PC-3 (cell line): ENCODE measurements at regions of chr1 and their contacts with region 1.

Region 1: GRCh38 chr1:212782422-212783154 is 9.0 kb downstream of the NSL1 start:
- DNase-seq: peak; percentile 57
- ATAC-seq: peak; percentile 64
- H3K4me3 ChIP-seq: no peak overlapping the region
- H3K27ac ChIP-seq: no peak overlapping the region
- H3K4me1 ChIP-seq: no peaks in the 10 kb centered on the region
- H3K27me3 ChIP-seq: no peaks in the 10 kb centered on the region
- CTCF ChIP-seq: peak; percentile 91

Region 2: GRCh38 chr1:212665241-212666115 is 117.1 kb before region 1 on chr1:
- CTCF ChIA-PET with region 1: no interaction called
- POLR2A ChIA-PET with region 1: no interaction called
- intact Hi-C with region 1: loop called (anchors 1 kb)
- DNase-seq: peak; percentile 95
- ATAC-seq: peak; percentile 88
- H3K4me3 ChIP-seq: peak overlapping the region; percentile 72
- H3K27ac ChIP-seq: no peak overlapping the region; the same call in 1 of the 2 replicates
- H3K4me1 ChIP-seq: peaks cover 35% of the 10 kb centered on the region
- H3K27me3 ChIP-seq: no peaks in the 10 kb centered on the region
- CTCF ChIP-seq: peak; percentile 99

Region 3: DNA sequence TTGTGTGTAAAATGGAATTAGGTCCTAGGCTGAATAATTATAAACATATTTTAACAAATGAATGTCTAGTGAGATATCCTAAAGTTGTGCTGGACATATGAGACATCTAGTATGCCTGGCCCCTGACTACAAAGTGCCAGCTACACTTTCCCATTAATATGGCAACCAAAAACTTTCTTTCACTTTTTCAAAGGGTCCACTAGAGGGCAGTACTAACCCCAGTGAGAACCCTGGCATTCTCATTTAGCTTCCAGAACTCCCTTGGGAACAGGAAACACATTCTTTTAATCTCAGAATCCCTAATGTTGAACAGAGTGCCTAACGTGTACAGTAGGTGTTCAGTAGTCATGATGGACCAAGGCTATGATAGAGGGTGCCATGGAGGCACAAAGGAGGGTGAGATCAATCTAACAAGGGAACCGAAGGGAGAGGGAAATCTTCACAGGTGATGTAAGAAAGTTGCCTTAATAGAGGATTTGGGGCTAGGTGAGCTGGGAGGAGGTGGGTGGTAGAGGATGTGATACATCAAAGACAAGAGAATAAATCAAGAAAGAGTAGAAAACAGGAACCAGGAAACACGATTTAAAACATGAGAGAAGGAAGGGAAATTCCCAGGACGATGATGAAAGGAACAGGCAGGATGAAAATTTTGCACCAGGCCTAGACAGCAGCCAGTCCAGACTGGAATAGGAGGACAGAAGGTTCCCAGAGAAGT is 32.6 kb before region 1 on chr1:
- CTCF ChIA-PET with region 1: interaction called, 3 read pairs
- POLR2A ChIA-PET with region 1: no interaction called
- intact Hi-C with region 1: loop called (anchors 1 kb)
- DNase-seq: peak; percentile 80
- ATAC-seq: peak; percentile 76
- H3K4me3 ChIP-seq: no peak overlapping the region
- H3K27ac ChIP-seq: no peak overlapping the region
- H3K4me1 ChIP-seq: no peaks in the 10 kb centered on the region
- H3K27me3 ChIP-seq: no peaks in the 10 kb centered on the region
- CTCF ChIP-seq: peak; percentile 93

Region 4: DNA sequence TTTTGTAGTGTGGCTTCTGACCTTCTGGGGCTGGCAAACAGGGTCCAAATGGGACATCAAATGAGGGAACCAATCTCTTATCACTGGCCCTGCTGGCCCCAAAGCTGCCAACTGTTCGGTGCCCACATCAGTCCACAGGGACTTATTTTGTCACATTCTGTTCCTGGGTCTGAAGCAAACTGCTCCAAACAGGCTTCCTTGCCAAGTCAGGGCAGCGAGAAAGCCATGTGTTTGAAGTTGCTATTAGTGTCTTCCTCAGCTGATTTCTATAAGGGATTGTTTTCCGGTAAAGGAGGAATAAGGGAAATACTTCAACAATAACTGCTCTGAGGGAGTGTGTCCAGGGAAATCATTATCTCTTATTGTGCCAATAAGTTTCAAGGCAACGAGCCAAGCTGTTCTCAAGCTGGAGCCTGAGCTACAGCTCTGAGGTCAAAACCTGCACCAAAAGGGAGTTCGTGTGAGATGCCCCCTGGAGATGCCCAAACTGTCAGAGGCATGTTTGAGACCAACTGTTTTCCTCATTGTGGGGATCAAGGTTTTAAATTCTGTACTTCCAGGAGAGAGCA is 823.7 kb after region 1 on chr1:
- CTCF ChIA-PET with region 1: no interaction called
- POLR2A ChIA-PET with region 1: no interaction called
- intact Hi-C with region 1: no loop called
- DNase-seq: no peak
- ATAC-seq: no peak
- H3K4me3 ChIP-seq: no peak overlapping the region
- H3K27ac ChIP-seq: no peak overlapping the region
- H3K4me1 ChIP-seq: no peaks in the 10 kb centered on the region
- H3K27me3 ChIP-seq: peaks cover 79% of the 10 kb centered on the region
- CTCF ChIP-seq: no peak